ENCODE measurements at regions of chr22 and their contacts with region 1.

Region 1: DNA sequence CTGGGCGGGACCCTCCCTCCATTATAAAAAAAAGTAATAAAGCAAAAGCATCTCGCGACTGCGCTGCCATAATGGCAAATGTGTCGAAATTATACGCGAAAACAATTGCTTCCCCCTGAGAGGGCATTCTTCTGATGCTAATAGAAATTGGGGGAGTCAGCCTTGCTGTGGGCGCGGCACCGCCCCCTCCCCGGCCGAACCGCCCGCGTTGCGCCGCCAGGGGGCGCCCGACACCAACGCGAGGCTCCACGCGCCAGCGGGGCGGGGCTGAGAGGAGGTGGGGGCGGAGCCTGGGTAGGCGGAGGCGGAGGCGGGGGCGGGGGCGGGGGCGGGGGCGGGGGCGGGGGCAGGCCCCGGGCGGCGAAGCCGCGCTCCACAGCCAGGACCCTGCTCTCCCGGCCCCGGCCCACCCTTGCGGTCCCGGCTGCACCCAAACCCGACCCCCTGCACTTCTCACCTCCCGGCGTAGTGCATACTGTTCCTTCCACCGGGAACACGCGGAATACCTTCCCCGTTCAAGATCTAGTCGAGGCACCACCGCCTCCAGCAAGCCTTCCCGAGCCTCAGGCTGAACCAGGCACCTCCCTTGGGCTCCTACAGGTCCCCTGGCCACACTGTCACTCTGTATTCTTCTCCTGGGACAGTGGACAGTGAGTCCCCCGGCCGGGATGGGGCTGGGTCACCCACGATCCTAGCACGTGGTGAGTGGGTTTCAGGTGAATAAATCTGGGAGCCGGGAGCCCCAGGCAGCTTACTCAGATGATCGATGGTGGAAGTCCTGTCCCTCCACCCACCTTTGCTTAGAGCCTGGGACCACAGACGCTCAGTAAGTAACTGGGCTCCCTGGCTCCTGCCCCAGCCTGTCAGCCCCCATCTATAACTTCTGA is 15.5 kb upstream of the UPK3A start:
- DNase-seq: peak; percentile 43
- H3K4me3 ChIP-seq: peak overlapping the region; percentile 67 to 82 (median 68)
- H3K27ac ChIP-seq: no peak overlapping the region
- H3K4me1 ChIP-seq: peaks cover 10% of the 10 kb centered on the region
- H3K27me3 ChIP-seq: no peaks in the 10 kb centered on the region
- CTCF ChIP-seq: peak; percentile 63 to 81

Region 2: DNA sequence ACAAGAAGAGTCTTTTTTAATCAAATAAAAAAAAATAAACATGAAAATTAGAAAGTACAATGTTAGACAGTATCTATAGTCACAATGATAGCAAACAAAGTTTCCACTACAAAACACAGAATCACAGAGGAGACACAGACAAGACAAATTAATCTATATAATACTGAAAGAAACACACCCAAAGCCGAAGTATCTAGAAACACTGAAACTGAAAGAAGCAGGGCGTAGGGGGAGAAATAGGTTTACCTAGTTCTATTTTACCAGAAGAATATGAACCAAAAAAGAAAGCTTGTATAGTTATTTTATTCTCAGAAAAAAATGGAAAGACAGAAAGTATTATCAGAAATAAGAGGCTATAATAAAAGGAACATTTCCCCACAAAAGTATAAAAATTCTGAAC is 132.6 kb before region 1 on chr22:
- CTCF ChIA-PET with region 1: no interaction called
- dilution Hi-C with region 1: no loop called
- in situ Hi-C with region 1: no loop called
- intact Hi-C with region 1: no loop called
- DNase-seq: no peak
- H3K4me3 ChIP-seq: no peak overlapping the region
- H3K27ac ChIP-seq: no peak overlapping the region
- H3K4me1 ChIP-seq: no peaks in the 10 kb centered on the region
- H3K27me3 ChIP-seq: no peaks in the 10 kb centered on the region
- CTCF ChIP-seq: no peak

Region 3: GRCh38 chr22:45381348-45381747 is 112.1 kb after region 1 on chr22:
- CTCF ChIA-PET with region 1: interaction called, 10 read pairs
- dilution Hi-C with region 1: no loop called
- in situ Hi-C with region 1: no loop called
- intact Hi-C with region 1: no loop called
- DNase-seq: no peak
- H3K4me3 ChIP-seq: no peak overlapping the region
- H3K27ac ChIP-seq: no peak overlapping the region
- H3K4me1 ChIP-seq: no peaks in the 10 kb centered on the region
- H3K27me3 ChIP-seq: no peaks in the 10 kb centered on the region
- CTCF ChIP-seq: no peak

Region 4: GRCh38 chr22:45435544-45436139 is 166.4 kb after region 1 on chr22:
- CTCF ChIA-PET with region 1: interaction called, 3 read pairs
- dilution Hi-C with region 1: no loop called
- in situ Hi-C with region 1: loop called in 1 of 2 experiments (anchors 5 kb)
- intact Hi-C with region 1: loop called (anchors 1 kb)
- DNase-seq: peak; percentile 79
- H3K4me3 ChIP-seq: no peak overlapping the region
- H3K27ac ChIP-seq: no peak overlapping the region
- H3K4me1 ChIP-seq: no peaks in the 10 kb centered on the region
- H3K27me3 ChIP-seq: no peaks in the 10 kb centered on the region
- CTCF ChIP-seq: peak; percentile 94 to 97

Region 5: GRCh38 chr22:45656577-45656976 is 387.4 kb after region 1 on chr22:
- CTCF ChIA-PET with region 1: no interaction called
- dilution Hi-C with region 1: loop called (anchors 10 kb)
- in situ Hi-C with region 1: no loop called
- intact Hi-C with region 1: no loop called
- DNase-seq: no peak
- H3K4me3 ChIP-seq: no peak overlapping the region
- H3K27ac ChIP-seq: no peak overlapping the region
- H3K4me1 ChIP-seq: no peaks in the 10 kb centered on the region
- H3K27me3 ChIP-seq: no peaks in the 10 kb centered on the region
- CTCF ChIP-seq: no peak

Region 6: GRCh38 chr22:45896261-45896951 is 627.2 kb after region 1 on chr22:
- CTCF ChIA-PET with region 1: no interaction called
- dilution Hi-C with region 1: loop called (anchors 10 kb)
- in situ Hi-C with region 1: no loop called
- intact Hi-C with region 1: no loop called
- DNase-seq: peak; percentile 75
- H3K4me3 ChIP-seq: no peak overlapping the region
- H3K27ac ChIP-seq: no peak overlapping the region
- H3K4me1 ChIP-seq: peaks cover 10% of the 10 kb centered on the region
- H3K27me3 ChIP-seq: no peaks in the 10 kb centered on the region
- CTCF ChIP-seq: no peak